Activated CD8-positive, alpha-beta T cell treated with anti-CD3 and anti-CD28 coated beads for 36 hours (primary cell): ENCODE measurements at regions of chr22 and their contacts with region 1.

Region 1: GRCh38 chr22:35409783-35410662 is 10.1 kb downstream of the MCM5 start:
- DNase-seq: peak; percentile 79
- ATAC-seq: peak; percentile 88
- H3K4me3 Mint-ChIP-seq: no peak overlapping the region
- H3K27ac Mint-ChIP-seq: peak overlapping the region; percentile 81
- H3K4me1 Mint-ChIP-seq: peaks cover 29% of the 10 kb centered on the region
- H3K27me3 Mint-ChIP-seq: no peaks in the 10 kb centered on the region
- CTCF ChIP-seq: no peak

Region 2: DNA sequence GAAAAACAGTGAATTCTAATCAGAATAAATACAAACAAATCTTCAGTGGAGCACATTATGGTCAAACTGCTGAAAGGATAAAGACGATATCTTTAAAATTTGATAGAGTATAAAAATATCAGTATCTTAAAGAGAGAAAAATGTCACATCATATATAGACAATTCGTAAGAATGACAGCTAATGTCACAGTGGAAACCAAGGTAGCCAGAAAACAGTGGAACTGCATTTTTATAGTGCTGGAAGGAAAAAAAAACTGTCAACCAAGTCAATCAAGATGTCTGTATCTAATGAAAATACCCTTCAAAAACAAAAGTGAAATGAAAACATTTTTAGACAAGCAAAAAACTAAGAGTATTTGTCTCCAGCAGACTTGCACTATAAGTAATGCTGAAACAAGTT is 226.1 kb before region 1 on chr22:
- CTCF ChIA-PET with region 1: no interaction called
- POLR2A ChIA-PET with region 1: no interaction called
- intact Hi-C with region 1: no loop called
- DNase-seq: no peak
- ATAC-seq: no peak
- H3K4me3 Mint-ChIP-seq: no peak overlapping the region
- H3K27ac Mint-ChIP-seq: no peak overlapping the region
- H3K4me1 Mint-ChIP-seq: no peaks in the 10 kb centered on the region
- H3K27me3 Mint-ChIP-seq: peaks cover 4% of the 10 kb centered on the region
- CTCF ChIP-seq: no peak

Region 3: GRCh38 chr22:35330258-35330861 is 79.7 kb before region 1 on chr22:
- CTCF ChIA-PET with region 1: no interaction called
- POLR2A ChIA-PET with region 1: no interaction called
- intact Hi-C with region 1: no loop called
- DNase-seq: peak; percentile 72
- ATAC-seq: peak; percentile 63
- H3K4me3 Mint-ChIP-seq: peak overlapping the region; percentile 82
- H3K27ac Mint-ChIP-seq: peak overlapping the region; percentile 95
- H3K4me1 Mint-ChIP-seq: peaks cover 24% of the 10 kb centered on the region
- H3K27me3 Mint-ChIP-seq: no peaks in the 10 kb centered on the region
- CTCF ChIP-seq: no peak

Region 4: DNA sequence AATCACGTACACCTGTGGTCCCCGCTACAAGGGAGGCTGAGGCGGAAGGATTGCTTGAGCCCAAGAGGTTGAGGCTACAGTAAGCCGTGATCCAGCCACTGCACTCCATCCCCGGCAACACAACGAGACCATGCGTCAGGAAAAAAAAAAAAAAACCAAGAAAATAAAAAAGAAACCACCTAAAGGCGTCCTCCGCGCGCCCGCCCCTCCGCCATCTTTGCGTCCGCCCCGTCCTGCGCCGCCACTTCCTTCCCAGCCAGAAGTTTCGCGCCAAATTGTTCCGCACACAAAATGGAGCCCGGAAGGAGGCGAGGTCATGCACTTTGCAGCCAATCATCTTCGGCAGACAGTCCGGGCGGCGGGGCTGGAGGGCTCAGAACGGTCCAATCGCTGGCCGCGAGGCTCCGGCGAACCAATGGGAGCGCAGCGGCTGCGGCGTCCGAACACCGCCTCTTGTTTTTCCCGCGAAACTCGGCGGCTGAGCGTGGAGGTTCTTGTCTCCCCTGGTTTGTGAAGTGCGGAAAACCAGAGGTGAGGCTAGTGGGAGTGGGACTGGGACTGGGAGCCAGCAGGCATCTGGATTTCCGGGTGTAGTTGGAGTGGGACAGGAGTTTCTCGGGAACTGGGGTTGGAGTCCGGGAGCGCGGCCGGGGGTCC is 10.2 kb before region 1 on chr22 and contains the start of gene MCM5:
- CTCF ChIA-PET with region 1: no interaction called
- POLR2A ChIA-PET with region 1: interaction called, 125 read pairs
- intact Hi-C with region 1: no loop called
- DNase-seq: peak; percentile 99
- ATAC-seq: peak; percentile 99
- H3K4me3 Mint-ChIP-seq: peak within 1 kb of the TSS; percentile 99
- H3K27ac Mint-ChIP-seq: peak within 1 kb of the TSS; percentile 99
- H3K4me1 Mint-ChIP-seq: peaks cover 26% of the 10 kb centered on the region
- H3K27me3 Mint-ChIP-seq: no peaks in the 10 kb centered on the region
- CTCF ChIP-seq: no peak
- total RNA-seq, gene MCM5: 318 to 319 TPM

Region 5: DNA sequence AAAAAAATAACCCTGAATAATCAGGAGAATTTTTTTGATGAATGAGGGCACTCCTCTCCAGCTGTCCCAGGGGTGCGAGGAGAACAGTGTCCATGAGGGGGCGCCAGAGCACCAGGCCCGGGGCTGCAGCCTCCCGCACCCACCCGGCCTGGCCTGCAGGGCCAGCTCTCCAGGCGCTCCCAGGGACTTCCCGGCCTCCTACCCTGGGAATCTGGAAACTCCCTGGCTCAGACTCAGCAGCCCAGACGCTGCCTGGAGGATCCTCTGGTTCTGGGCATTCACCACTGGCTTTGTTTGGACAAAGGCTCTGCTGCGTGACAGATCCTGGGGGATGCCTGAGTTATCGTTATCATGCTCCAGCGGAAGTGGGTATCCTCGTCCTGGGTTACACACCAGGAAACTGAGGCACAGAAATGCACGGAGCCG is 20.9 kb after region 1 on chr22:
- CTCF ChIA-PET with region 1: interaction called, 4 read pairs
- POLR2A ChIA-PET with region 1: interaction called, 237 read pairs
- intact Hi-C with region 1: no loop called
- DNase-seq: peak; percentile 71
- ATAC-seq: peak; percentile 73
- H3K4me3 Mint-ChIP-seq: no peak overlapping the region
- H3K27ac Mint-ChIP-seq: no peak overlapping the region
- H3K4me1 Mint-ChIP-seq: no peaks in the 10 kb centered on the region
- H3K27me3 Mint-ChIP-seq: no peaks in the 10 kb centered on the region
- CTCF ChIP-seq: peak; percentile 92